ENCODE measurements at regions of chrX and their contacts with region 1.

Region 1: GRCh38 chrX:47683146-47683828 is 24.3 kb upstream of the UXT start:
- DNase-seq: no peak
- H3K4me3 ChIP-seq: no peak overlapping the region
- H3K27ac ChIP-seq: no peak overlapping the region
- H3K4me1 ChIP-seq: no peaks in the 10 kb centered on the region
- H3K27me3 ChIP-seq: no peaks in the 10 kb centered on the region
- CTCF ChIP-seq: no peak
- POLR2A ChIP-seq: no peak

Region 2: GRCh38 chrX:48996969-48997368 is 1313.7 kb after region 1 on chrX:
- intact Hi-C with region 1: loop called (anchors 10 kb)
- DNase-seq: no peak
- H3K4me3 ChIP-seq: no peak overlapping the region
- H3K27ac ChIP-seq: no peak overlapping the region
- H3K4me1 ChIP-seq: peaks cover 19% of the 10 kb centered on the region
- H3K27me3 ChIP-seq: no peaks in the 10 kb centered on the region
- CTCF ChIP-seq: no peak
- POLR2A ChIP-seq: no peak